HEK293 (cell line): ENCODE measurements at regions of chr6 and their contacts with region 1.

Region 1: DNA sequence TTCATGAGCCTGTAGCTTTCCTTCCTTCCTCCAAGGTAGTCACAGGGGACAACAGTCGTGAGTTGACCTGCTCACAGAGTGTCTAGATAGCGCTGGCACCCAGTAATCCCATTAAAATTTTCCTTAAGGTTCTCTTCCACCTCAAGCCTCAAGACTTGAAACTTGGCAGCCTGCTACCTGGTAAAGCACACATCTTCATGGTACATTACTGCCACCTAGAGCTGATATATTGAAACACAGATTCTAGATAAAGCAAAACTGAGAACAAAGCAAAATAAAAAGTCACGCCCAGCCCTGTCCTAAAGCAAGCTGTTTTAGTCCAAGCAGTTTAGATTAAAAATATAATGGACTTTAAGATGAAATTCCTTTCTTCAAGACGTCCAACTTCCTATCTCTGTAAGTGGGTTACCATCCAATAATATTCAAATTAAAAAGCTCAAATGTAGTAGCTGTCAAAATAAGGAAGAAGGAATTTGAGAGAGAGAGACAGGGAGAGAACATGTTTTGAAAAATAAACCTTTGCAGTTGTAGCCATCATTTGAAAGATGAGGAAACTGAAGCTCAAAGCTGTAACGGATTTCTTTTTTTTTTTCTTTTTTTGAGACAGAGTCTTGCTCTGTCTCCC is 50.7 kb upstream of the CD83 start:
- H3K4me3 ChIP-seq: no peak overlapping the region
- H3K27ac ChIP-seq: no peak overlapping the region
- H3K4me1 ChIP-seq: no peaks in the 10 kb centered on the region
- CTCF ChIP-seq: peak; percentile 53

Region 2: GRCh38 chr6:13762611-13763441 is 304.1 kb before region 1 on chr6:
- CTCF ChIA-PET with region 1: no interaction called
- POLR2A ChIA-PET with region 1: no interaction called
- H3K4me3 ChIP-seq: no peak overlapping the region
- H3K27ac ChIP-seq: no peak overlapping the region
- H3K4me1 ChIP-seq: peaks cover 4% of the 10 kb centered on the region; the same call in 1 of the 2 replicates
- CTCF ChIP-seq: no peak

Region 3: DNA sequence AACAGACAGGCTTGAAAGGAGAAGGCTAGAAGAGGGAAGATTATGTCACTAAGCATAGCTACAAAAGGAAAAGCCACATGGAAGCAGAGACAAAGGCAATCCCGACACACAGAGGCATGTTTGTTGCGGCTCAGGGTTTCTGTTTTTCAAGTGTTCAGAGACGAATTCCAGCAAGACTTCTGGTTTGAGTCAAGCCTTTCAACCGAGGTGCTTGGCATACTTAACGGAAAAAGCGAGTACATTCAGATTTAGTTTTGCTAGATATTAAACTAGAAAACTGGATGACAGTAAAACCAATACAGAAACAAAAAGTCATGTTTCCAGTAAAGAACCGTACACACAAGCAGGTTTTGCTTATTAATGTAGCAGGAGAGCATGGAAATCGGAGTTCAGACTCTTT is 279.8 kb before region 1 on chr6:
- CTCF ChIA-PET with region 1: interaction called, 12 read pairs
- POLR2A ChIA-PET with region 1: no interaction called
- H3K4me3 ChIP-seq: no peak overlapping the region
- H3K27ac ChIP-seq: no peak overlapping the region
- H3K4me1 ChIP-seq: no peaks in the 10 kb centered on the region
- CTCF ChIP-seq: no peak

Region 4: DNA sequence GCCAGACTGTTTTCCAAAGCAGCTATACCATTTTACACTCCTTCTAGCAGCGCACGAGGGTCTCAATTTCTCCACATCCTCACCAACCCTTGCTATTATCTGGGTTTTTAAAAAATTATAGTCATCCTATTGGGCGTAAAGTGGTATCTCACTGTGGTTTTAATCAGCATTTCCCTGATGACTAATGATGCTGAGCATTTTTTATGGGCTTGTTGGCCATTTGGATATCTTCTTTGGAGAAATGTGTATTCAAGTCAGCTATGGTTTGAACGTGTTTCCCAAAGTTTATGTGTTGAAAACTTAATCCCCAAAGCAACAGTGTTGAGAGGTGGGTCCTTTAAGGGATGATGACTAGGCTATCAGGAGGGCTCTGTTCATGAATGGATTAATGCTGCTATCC is 259.2 kb before region 1 on chr6:
- CTCF ChIA-PET with region 1: interaction called, 11 read pairs
- POLR2A ChIA-PET with region 1: no interaction called
- H3K4me3 ChIP-seq: no peak overlapping the region
- H3K27ac ChIP-seq: no peak overlapping the region
- H3K4me1 ChIP-seq: peaks cover 2% of the 10 kb centered on the region; the same call in 1 of the 2 replicates
- CTCF ChIP-seq: no peak

Region 5: DNA sequence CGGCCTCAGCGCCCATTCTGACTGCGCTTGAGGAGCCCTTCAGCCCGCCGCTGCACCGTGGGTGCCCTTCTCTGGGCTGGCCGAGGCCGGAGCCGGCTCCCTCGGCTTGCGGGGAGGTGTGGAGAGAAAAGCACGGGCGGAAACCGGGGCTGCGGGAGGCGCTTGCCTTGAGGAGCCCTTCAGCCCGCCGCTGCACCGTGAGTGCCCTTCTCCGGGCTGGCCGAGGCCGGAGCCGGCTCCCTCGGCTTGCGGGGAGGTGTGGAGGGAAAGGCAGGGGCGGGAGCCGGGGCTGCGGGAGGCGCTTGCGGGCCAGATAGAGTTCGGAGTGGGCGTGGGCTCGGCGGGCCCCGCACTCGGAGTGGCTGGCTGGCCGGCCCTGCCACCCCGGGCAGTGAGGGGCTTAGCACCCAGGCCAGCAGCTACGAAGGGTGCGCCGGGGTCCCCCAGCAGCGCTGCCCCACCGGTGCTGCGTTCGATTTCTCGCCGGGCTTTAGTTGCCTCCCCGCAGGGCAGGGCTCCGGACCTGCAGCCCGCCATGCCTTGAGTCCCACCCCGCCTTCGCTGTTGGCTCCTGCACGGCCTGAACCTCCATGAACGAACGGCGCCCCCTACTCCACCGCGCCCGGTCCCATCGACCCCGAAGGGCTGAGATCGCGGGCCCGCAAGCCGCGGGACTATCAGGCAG is 206.9 kb before region 1 on chr6:
- CTCF ChIA-PET with region 1: no interaction called
- POLR2A ChIA-PET with region 1: no interaction called
- H3K4me3 ChIP-seq: no peak overlapping the region
- H3K27ac ChIP-seq: no peak overlapping the region
- H3K4me1 ChIP-seq: 0 out of 2 replicates have a peak, but pooled peaks cover 2% of the 10 kb centered on the region
- CTCF ChIP-seq: no peak

Region 6: DNA sequence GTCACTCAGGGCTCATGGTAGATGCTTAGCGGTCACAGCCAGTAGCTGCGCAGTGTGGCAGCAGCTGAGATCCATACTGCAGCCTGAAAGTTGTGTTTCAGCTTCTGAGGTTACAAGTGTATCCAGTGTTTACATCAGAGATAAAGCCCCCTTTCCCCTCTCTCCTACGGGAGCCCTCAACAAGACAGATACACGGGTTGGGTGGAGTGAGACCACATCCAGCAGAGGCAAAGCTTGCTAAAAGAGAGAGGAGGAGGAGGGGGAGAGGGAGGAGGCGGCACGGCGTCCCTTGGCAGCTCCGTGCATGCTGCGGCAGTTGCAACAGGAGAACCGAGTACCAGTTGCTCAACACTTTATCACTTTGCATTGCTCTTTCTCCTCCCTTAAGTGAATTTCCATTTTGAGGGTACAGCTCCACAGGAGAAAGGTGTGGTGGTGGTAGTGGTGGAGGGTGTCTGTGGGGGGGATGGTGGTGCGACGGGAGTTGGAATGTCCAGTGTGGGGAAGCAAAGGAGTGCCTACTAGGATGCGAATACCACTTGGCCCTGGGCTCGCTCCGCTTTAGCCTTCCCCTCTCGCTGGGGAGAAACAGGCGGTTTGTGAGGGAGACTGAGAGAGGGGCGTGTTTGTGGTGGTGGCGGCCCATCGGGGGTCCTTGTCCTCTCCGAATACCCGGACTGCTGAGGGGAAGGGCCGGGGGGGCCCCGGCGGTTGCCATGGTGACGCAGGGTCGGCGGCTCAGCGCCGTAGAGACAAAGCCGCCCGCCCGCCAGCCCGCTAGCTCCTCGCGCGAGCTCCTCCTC is 142.5 kb before region 1 on chr6:
- CTCF ChIA-PET with region 1: interaction called, 30 read pairs
- POLR2A ChIA-PET with region 1: interaction called, 3 read pairs
- H3K4me3 ChIP-seq: peak overlapping the region; percentile 73
- H3K27ac ChIP-seq: peak overlapping the region; percentile 40
- H3K4me1 ChIP-seq: no peaks in the 10 kb centered on the region
- CTCF ChIP-seq: no peak

Region 7: DNA sequence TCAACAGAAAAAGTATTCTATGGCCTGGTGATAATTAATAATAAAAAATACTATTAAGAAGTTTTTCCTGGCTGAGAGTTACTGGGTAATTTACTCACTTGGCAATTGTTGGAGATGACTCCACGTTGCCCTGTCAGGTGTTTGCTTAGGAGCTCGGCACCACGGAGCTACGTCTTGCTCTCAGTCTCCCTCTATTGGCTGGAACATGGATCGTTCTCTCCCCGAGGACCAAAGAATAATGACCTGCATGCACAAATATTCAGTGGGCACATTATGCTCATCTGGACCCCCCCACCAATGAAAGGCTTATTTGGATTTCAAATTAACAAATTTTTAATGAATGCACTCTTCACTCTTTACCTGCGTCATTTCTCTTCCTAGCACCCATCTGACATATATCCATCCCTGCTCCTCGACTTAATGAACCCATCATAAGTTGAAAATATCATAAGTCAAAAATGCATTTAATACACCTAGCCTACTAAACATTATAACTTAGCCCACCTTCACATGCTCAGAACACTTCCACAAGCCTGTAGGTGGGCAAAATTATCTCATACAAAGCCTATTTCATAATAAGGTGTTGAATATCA is 20.3 kb before region 1 on chr6:
- CTCF ChIA-PET with region 1: interaction called, 35 read pairs
- POLR2A ChIA-PET with region 1: no interaction called
- H3K4me3 ChIP-seq: no peak overlapping the region
- H3K27ac ChIP-seq: no peak overlapping the region
- H3K4me1 ChIP-seq: no peaks in the 10 kb centered on the region
- CTCF ChIP-seq: peak; percentile 26; the same call in 1 of the 2 replicates

Region 8: GRCh38 chr6:14088600-14089192 is 21.8 kb after region 1 on chr6:
- CTCF ChIA-PET with region 1: interaction called, 15 read pairs
- POLR2A ChIA-PET with region 1: no interaction called
- H3K4me3 ChIP-seq: no peak overlapping the region
- H3K27ac ChIP-seq: no peak overlapping the region
- H3K4me1 ChIP-seq: no peaks in the 10 kb centered on the region
- CTCF ChIP-seq: no peak

Region 9: GRCh38 chr6:14121936-14122344 is 55.0 kb after region 1 on chr6:
- CTCF ChIA-PET with region 1: no interaction called
- POLR2A ChIA-PET with region 1: no interaction called
- H3K4me3 ChIP-seq: no peak overlapping the region
- H3K27ac ChIP-seq: no peak overlapping the region
- H3K4me1 ChIP-seq: peaks cover 5% of the 10 kb centered on the region
- CTCF ChIP-seq: no peak